Lower leg skin (tissue), 4 donors: ENCODE measurements at regions of chr10 and their contacts with region 1.

Region 1: DNA sequence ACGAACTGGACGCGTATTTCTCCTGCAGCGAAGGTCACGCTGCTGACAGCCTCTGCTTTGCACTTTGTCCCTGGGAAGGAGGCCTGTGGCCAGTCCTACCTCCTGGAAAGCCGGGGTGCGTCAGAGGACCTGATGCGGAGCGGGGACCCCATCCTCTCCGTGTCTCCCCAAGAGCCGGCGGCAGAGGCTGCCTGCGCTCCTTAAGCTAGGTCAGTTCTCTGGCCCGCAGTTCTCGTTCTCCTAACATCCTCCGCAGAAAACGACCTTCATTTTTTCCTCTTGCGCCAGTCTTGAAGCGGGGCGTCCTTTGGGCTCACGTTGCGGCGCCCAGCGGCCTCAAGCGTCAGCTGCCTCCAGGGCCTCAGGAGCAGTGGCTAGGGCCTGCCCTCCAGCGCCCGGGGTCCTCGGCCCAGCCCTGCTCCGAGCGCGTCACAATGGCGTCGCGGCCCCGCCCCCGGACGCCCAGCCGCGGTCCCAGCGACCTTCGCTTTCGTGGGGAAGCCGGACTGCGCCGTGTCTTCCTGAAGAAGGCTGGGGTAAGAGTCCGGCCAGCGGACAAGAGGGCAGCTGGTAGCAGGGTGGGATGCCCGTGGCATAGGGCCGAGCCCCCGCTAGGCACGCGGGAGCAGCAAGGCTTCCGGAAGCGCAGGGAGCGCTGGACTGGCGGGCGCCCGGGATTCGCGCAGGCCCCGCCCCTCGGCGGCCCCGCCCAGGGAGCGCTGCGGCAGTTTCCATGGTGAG is at the start of gene ZNF487:
- DNase-seq: peak; percentile 84 to 98
- H3K4me3 ChIP-seq: peak within 1 kb of the TSS; percentile 75
- CTCF ChIP-seq: no peak
- POLR2A ChIP-seq: peak in 1 of 2 donors; percentile 75
- total RNA-seq, gene ZNF487: 2.9 to 7.2 (median 3.7) TPM

Region 2: GRCh38 chr10:43380610-43381222 is 55.9 kb before region 1 on chr10:
- intact Hi-C with region 1: no loop called
- DNase-seq: no peak
- H3K4me3 ChIP-seq: no peak overlapping the region
- CTCF ChIP-seq: no peak
- POLR2A ChIP-seq: no peak

Region 3: DNA sequence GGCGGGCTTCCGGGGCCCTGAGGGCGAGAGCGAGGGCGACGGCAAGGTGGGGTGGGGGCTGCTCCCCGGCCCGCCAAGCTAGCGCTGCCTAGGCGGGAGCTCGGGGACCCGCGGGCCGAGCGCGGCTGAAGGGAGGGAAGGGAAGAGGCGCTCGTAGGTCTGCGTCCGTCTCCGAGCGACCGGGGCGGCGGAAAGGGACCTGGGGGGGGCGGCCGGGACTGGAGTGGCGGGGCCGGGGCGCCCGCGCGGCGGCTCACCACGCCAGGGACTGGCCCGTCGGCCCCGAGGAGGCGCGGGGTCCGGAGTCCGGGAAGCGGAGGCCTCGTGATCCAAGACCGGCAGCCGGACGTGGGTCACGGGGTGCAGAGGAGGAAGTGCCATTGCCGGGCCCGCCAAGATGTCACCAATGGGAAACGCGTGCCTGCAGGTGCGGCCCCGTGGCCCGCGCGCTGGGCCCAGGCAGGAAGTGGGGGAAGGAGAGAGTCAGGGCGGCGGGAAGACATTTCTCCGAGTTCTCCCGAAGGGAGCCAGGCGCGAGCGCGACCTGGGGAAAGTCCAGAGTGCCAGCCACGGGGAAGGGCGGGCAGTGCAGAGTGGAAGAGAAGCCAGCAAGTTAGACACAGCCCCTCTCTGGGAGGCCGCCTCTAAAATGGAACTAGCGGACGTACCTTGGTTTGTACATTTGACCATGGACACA is 39.5 kb before region 1 on chr10:
- intact Hi-C with region 1: loop called (anchors 5 kb)
- DNase-seq: peak; percentile 87 to 98
- H3K4me3 ChIP-seq: peak overlapping the region; percentile 46
- CTCF ChIP-seq: no peak
- POLR2A ChIP-seq: no peak